B cell (primary cell): ENCODE measurements at regions of chr16 and their contacts with region 1.

Region 1: DNA sequence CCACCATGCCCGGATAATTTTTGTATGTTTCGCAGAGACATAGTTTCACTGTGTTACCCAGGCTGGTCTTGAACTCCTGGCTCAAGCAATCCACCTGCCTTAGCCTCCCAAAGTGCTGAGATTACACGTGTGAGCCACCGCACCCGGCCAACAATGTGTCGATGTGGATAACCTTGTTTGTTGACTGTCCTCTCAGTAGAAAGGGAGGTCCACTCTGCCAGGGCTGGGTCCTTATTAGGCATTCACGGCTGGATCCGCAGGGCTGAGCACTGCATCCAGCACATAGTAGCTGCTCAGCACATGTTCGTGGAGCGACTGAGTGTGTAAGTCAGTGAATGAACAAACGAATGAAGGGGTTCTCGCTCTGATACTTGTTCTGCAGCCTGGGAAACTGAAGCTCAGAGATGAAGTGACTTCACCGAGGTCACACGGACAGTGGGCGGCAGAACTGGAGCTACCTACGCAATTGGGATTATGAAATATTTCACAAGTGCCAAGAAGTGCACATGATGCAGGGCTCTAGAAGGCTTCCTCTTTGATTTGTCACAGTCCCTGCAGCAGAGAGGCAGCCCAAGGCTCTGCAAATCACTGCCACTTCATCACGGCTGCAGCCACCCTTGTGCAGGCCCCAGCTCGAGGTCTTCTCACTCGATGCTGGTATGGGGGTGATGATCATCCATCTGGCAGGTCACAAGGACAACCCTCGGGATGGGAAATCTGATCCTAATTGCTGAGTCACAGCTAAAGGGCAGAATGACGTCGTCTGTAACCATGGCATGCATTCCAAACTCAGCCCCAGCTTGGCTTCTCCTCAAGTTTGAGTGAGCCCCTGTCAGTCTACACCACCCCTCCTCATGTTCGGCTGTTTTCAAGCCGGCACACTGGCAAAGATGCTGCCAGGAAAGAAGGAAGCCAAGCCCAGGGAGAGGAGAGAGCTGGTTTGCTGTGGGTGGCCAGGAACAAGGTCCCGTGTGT is 28.0 kb upstream of the SNN start:
- DNase-seq: no peak
- ATAC-seq: no peak
- H3K4me3 ChIP-seq: no peak overlapping the region
- H3K4me3 Mint-ChIP-seq: no peak overlapping the region
- H3K27ac ChIP-seq: no peak overlapping the region
- H3K27ac Mint-ChIP-seq: no peak overlapping the region
- H3K4me1 ChIP-seq: peaks cover 7 to 9% of the 10 kb centered on the region in 2 donors
- H3K4me1 Mint-ChIP-seq: peaks cover 6% of the 10 kb centered on the region
- H3K27me3 ChIP-seq: no peaks in the 10 kb centered on the region
- H3K27me3 Mint-ChIP-seq: no peaks in the 10 kb centered on the region
- CTCF ChIP-seq: no peak

Region 2: GRCh38 chr16:11212798-11213205 is 427.4 kb before region 1 on chr16:
- CTCF ChIA-PET with region 1: no interaction called
- POLR2A ChIA-PET with region 1: no interaction called
- intact Hi-C with region 1: no loop called
- DNase-seq: no peak
- ATAC-seq: peak; percentile 45
- H3K4me3 ChIP-seq: no peak overlapping the region
- H3K4me3 Mint-ChIP-seq: no peak overlapping the region
- H3K27ac ChIP-seq: no peak overlapping the region
- H3K27ac Mint-ChIP-seq: no peak overlapping the region
- H3K4me1 ChIP-seq: peaks cover 4 to 9% of the 10 kb centered on the region in 2 donors
- H3K4me1 Mint-ChIP-seq: peaks cover 6% of the 10 kb centered on the region
- H3K27me3 ChIP-seq: peaks cover 0 to 11% (median 2%) of the 10 kb centered on the region in 4 experiments
- H3K27me3 Mint-ChIP-seq: peaks cover 18% of the 10 kb centered on the region
- CTCF ChIP-seq: no peak

Region 3: GRCh38 chr16:11535471-11535870 is 104.7 kb before region 1 on chr16:
- CTCF ChIA-PET with region 1: interaction called, 128 read pairs
- POLR2A ChIA-PET with region 1: no interaction called
- intact Hi-C with region 1: loop called (anchors 1 kb)
- DNase-seq: no peak
- ATAC-seq: no peak
- H3K4me3 ChIP-seq: no peak overlapping the region
- H3K4me3 Mint-ChIP-seq: no peak overlapping the region
- H3K27ac ChIP-seq: no peak overlapping the region
- H3K27ac Mint-ChIP-seq: no peak overlapping the region
- H3K4me1 ChIP-seq: no peaks in the 10 kb centered on the region
- H3K4me1 Mint-ChIP-seq: peaks cover 5% of the 10 kb centered on the region
- H3K27me3 ChIP-seq: no peaks in the 10 kb centered on the region
- H3K27me3 Mint-ChIP-seq: no peaks in the 10 kb centered on the region
- CTCF ChIP-seq: no peak

Region 4: DNA sequence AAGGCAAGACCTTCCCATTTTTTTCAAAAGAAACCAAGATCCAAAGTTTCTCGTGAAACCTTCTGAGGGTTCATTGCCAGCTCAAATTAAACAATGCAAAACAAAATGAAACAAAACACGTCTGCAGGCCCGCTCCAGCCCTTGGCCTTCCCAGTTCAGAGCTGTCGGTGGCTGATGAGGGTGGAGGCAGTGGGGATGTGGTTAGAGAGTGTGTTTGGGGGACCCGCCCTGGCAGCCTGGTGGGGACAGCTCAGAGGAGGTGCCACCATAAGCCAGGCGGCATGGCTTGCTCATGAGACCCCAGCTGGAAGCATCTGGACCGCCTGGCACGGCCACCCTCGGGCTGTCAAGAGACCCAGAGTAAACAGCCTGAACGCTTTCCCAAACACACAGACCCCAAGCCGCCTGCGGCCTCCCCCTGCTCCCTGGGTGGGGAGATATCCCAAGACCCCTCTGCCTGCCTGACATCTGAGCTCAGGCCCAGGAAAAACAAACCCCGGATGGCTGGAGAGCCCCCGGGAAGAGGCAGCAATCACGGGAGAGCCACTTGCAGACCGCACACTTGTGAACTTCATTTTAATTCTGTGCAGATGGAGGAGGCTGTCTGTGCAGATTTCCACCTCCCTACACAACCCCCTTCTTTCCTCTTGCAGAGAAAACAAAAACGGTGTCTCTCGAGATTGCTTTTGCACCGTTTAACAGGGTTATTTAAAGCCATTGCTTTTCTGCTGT is 18.1 kb before region 1 on chr16:
- CTCF ChIA-PET with region 1: interaction called, 15 read pairs
- POLR2A ChIA-PET with region 1: no interaction called
- intact Hi-C with region 1: no loop called
- DNase-seq: peak; percentile 54
- ATAC-seq: peak; percentile 63
- H3K4me3 ChIP-seq: peak overlapping the region in 4 of 5 experiments; percentile 9 to 63 (median 36)
- H3K4me3 Mint-ChIP-seq: peak overlapping the region; percentile 77
- H3K27ac ChIP-seq: peak overlapping the region; percentile 68 to 84
- H3K27ac Mint-ChIP-seq: peak overlapping the region; percentile 85
- H3K4me1 ChIP-seq: peaks cover 52 to 75% of the 10 kb centered on the region in 2 donors
- H3K4me1 Mint-ChIP-seq: peaks cover 52% of the 10 kb centered on the region
- H3K27me3 ChIP-seq: no peaks in the 10 kb centered on the region
- H3K27me3 Mint-ChIP-seq: no peaks in the 10 kb centered on the region
- CTCF ChIP-seq: no peak

Region 5: DNA sequence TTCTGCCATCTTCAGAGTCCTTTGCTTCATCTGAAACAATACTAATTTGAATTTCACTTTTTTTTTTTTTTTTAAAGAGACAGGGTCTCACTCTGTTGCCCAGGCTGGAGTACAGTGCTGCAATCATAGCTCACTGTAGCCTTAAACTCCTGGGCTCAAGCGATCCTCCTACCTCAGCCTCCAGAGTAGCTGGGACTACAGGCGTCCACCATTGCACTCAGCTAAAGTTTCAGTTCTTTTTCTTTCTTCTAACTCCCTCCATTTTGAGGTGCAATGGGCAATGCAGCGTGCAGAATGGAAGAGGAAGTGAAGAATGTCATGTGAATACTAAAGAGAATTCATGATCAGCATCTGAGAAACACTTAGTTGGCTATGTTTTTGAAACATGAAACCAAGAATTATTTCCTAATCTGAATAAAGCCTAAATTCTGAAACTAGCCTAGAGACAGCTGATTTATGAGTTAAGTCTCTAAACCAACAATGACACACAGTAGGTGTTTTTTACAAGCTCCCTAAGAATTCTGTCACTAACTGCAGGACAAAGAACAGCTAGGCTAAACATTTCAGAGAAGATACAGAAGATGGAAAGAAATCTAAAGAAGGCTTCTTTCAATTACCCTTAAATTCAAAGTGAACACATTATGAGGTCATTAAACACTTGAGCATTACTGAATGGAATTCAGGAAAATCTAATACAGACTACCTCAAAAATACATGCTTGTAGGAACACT is 49.0 kb after region 1 on chr16:
- CTCF ChIA-PET with region 1: interaction called, 17 read pairs
- POLR2A ChIA-PET with region 1: no interaction called
- intact Hi-C with region 1: no loop called
- DNase-seq: peak; percentile 87
- ATAC-seq: peak; percentile 96
- H3K4me3 ChIP-seq: peak overlapping the region in 1 of 5 experiments; percentile 49
- H3K4me3 Mint-ChIP-seq: peak overlapping the region; percentile 88
- H3K27ac ChIP-seq: peak overlapping the region; percentile 80 to 89
- H3K27ac Mint-ChIP-seq: peak overlapping the region; percentile 98
- H3K4me1 ChIP-seq: peaks cover 70 to 71% of the 10 kb centered on the region in 2 donors
- H3K4me1 Mint-ChIP-seq: peaks cover 76% of the 10 kb centered on the region
- H3K27me3 ChIP-seq: no peaks in the 10 kb centered on the region
- H3K27me3 Mint-ChIP-seq: no peaks in the 10 kb centered on the region
- CTCF ChIP-seq: no peak